ENCODE measurements at regions of chr20 and their contacts with region 1.

Region 1: GRCh38 chr20:24992487-24993205 is at the start of gene APMAP:
- DNase-seq: peak; percentile 96 to 97
- ATAC-seq: peak; percentile 95 to 97 (median 96)
- H3K4me3 ChIP-seq: peak within 1 kb of the TSS; percentile 53 to 96 (median 87)
- H3K27ac ChIP-seq: peak within 1 kb of the TSS; percentile 71 to 96 (median 93)
- H3K4me1 ChIP-seq: peaks cover 5 to 78% (median 49%) of the 10 kb centered on the region in 9 donors
- H3K27me3 ChIP-seq: no peaks in the 10 kb centered on the region
- CTCF ChIP-seq: no peak
- total RNA-seq, gene APMAP: 22.5 to 44.6 (median 33.1) TPM

Region 2: DNA sequence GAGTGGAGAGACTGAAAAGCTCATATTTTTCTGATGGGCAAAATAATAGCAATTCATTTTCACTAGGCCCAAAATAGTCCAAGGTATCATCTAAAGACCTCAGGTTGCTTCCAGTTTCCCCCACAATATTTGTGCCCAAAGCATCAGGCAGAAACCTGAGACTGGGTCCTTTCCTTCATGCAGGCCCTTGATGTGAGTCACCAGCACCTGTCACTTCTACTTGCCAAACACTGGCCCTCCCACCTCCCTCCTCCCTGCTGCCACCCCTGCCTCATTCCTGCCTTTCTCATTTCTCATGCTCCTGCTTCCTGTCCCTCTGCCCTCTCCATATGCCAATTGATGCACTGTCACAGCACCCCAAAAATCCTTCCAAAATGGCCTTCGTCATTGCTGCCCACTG is 273.9 kb before region 1 on chr20:
- intact Hi-C with region 1: no loop called
- DNase-seq: no peak
- ATAC-seq: no peak
- H3K4me3 ChIP-seq: no peak overlapping the region
- H3K27ac ChIP-seq: no peak overlapping the region
- H3K4me1 ChIP-seq: no peaks in the 10 kb centered on the region
- H3K27me3 ChIP-seq: peaks cover 0 to 26% (median 5%) of the 10 kb centered on the region in 7 donors
- CTCF ChIP-seq: no peak

Region 3: DNA sequence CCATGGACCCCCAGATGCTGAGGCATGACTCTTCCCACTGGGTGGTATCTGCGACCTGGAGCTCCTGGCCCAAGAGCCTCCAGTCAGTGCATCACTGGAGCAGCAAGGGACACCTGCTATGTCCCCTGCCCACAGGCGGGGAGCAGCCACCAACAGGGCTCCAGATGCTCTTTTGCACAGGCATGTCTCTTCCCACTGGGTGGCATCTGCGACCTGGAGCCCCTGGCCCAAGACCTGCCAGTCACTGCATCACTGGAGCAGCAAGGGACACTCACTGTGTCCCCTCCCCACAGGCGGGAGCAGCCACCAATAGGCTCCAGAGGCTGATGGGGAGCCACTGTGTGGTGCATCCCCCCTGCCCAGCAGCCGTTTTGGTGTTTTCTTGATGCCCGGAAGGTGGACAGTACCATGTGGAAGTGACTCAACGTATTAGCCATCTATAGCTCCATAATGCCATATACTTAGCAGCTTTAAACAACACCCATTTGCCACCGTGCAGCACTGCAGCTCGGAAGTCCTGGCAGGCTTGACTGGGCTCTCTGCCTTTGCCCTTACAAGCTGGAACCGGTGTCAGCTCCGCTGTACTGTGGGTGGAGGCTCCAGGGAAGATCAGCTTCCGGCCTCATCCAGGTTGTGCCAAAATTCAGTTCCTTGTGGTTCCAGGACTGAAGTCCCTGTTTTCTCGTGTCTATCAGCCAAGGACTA is 168.5 kb before region 1 on chr20:
- intact Hi-C with region 1: no loop called
- DNase-seq: no peak
- ATAC-seq: no peak
- H3K4me3 ChIP-seq: no peak overlapping the region
- H3K27ac ChIP-seq: no peak overlapping the region
- H3K4me1 ChIP-seq: no peaks in the 10 kb centered on the region
- H3K27me3 ChIP-seq: peaks cover 0 to 4% (median 0%) of the 10 kb centered on the region in 7 donors
- CTCF ChIP-seq: no peak

Region 4: DNA sequence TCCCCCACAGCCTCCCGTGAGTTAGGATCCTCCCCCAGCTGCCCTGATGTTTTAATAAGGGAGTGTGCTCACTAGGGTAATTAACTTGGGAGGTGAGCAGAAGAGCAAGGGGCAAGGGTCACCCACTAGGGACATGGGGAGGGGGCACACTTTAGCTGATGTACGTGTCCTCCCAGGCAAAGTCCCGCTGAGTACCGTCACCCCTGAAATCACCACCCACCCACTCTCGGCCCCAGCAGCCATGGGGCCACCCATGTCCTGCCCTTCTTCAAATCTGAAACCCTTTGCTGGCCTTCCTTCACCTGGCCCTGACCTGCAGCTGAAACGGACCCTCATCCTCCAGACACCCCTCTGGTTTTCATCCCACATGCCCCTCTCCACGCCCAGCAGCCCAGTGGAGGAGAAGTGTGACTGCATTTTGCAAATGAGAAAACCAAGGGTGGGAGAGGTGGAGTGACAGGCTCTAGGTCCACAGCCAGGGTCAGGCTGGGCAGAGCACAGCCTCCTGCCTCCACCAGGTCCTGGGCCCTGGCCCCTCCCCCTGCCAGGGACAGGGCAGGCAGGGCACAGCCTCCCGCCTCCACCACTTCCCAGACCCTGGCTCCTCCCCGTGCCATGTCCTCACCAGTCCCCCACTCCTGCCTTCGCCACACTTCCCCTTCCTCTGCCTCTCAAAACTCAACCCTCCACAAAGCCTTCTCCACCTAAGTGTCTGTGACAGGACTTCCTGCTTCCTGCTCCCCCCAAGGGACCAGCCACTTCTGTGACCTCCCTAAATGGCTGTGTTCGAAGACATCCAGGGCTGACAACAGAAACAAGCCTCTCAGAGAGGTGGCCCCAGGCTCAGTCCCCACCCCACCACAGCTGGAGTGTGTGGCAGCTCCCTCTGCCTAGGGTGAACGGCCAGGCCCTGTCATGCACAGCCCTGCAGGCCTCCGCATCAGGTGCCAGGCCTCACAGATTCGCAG is 50.2 kb after region 1 on chr20:
- intact Hi-C with region 1: no loop called
- DNase-seq: peak; percentile 70 to 76
- ATAC-seq: peak; percentile 35 to 51 (median 41)
- H3K4me3 ChIP-seq: no peak overlapping the region
- H3K27ac ChIP-seq: peak overlapping the region; percentile 77 to 98 (median 90)
- H3K4me1 ChIP-seq: peaks cover 66 to 100% (median 97%) of the 10 kb centered on the region in 9 donors
- H3K27me3 ChIP-seq: no peaks in the 10 kb centered on the region
- CTCF ChIP-seq: no peak

Region 5: GRCh38 chr20:25178563-25179438 is 186.2 kb after region 1 on chr20:
- intact Hi-C with region 1: loop called in 8 of 10 experiments (anchors 1 to 10 kb)
- DNase-seq: no peak
- ATAC-seq: peak; percentile 62 to 91 (median 78)
- H3K4me3 ChIP-seq: no peak overlapping the region
- H3K27ac ChIP-seq: no peak overlapping the region
- H3K4me1 ChIP-seq: peaks cover 0 to 9% (median 4%) of the 10 kb centered on the region in 9 donors
- H3K27me3 ChIP-seq: no peaks in the 10 kb centered on the region
- CTCF ChIP-seq: peak; percentile 59 to 80 (median 75)

Region 6: GRCh38 chr20:25195014-25195961 is 202.6 kb after region 1 on chr20 and contains the start of gene ENTPD6:
- intact Hi-C with region 1: loop called in 4 of 10 experiments (anchors 5 kb)
- DNase-seq: peak; percentile 92 to 97
- ATAC-seq: peak; percentile 83 to 93 (median 92)
- H3K4me3 ChIP-seq: peak within 1 kb of the TSS; percentile 75 to 99 (median 92)
- H3K27ac ChIP-seq: peak within 1 kb of the TSS; percentile 84 to 97 (median 93)
- H3K4me1 ChIP-seq: peaks cover 15 to 72% (median 51%) of the 10 kb centered on the region in 9 donors
- H3K27me3 ChIP-seq: no peaks in the 10 kb centered on the region
- CTCF ChIP-seq: peak in 5 of 9 donors; percentile 13 to 51 (median 36)
- total RNA-seq, gene ENTPD6: 54.6 to 141 (median 78.0) TPM

Region 7: GRCh38 chr20:25294459-25295385 is 302.1 kb after region 1 on chr20:
- intact Hi-C with region 1: loop called in 1 of 10 experiments (anchors 10 kb)
- DNase-seq: peak in 1 of 2 donors; percentile 54
- ATAC-seq: peak; percentile 19 to 54 (median 44)
- H3K4me3 ChIP-seq: no peak overlapping the region
- H3K27ac ChIP-seq: peak overlapping the region; percentile 29 to 85 (median 67)
- H3K4me1 ChIP-seq: peaks cover 24 to 73% (median 44%) of the 10 kb centered on the region in 9 donors
- H3K27me3 ChIP-seq: no peaks in the 10 kb centered on the region
- CTCF ChIP-seq: peak; percentile 36 to 80 (median 63)

Region 8: DNA sequence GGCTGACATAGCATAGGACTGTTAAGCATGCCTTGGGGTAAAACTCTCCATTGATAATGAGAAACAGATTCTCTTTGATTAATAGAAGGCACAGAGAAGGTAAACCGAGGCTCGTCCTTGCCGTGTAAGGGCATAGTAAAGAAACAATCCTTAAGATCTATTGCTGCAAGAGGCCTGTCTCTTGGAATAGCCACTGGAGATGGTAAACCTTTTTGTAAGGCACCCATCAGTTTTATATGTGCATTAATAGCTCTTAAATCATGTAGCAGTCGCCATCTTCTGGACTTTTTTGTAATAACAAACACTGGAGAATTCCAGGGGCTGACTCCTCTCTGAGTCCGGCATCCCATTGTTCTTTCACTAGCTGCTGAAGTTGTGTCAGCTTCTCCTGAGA is 406.4 kb after region 1 on chr20:
- intact Hi-C with region 1: loop called in 8 of 10 experiments (anchors 5 to 10 kb)
- DNase-seq: peak in 1 of 2 donors; percentile 31
- ATAC-seq: peak; percentile 75 to 92 (median 87)
- H3K4me3 ChIP-seq: no peak overlapping the region
- H3K27ac ChIP-seq: no peak overlapping the region
- H3K4me1 ChIP-seq: no peaks in the 10 kb centered on the region
- H3K27me3 ChIP-seq: no peaks in the 10 kb centered on the region
- CTCF ChIP-seq: peak; percentile 31 to 78 (median 63)

Measured in heart right ventricle (tissue), 16 donors.